ENCODE measurements at regions of chr6 and their contacts with region 1.

Region 1: DNA sequence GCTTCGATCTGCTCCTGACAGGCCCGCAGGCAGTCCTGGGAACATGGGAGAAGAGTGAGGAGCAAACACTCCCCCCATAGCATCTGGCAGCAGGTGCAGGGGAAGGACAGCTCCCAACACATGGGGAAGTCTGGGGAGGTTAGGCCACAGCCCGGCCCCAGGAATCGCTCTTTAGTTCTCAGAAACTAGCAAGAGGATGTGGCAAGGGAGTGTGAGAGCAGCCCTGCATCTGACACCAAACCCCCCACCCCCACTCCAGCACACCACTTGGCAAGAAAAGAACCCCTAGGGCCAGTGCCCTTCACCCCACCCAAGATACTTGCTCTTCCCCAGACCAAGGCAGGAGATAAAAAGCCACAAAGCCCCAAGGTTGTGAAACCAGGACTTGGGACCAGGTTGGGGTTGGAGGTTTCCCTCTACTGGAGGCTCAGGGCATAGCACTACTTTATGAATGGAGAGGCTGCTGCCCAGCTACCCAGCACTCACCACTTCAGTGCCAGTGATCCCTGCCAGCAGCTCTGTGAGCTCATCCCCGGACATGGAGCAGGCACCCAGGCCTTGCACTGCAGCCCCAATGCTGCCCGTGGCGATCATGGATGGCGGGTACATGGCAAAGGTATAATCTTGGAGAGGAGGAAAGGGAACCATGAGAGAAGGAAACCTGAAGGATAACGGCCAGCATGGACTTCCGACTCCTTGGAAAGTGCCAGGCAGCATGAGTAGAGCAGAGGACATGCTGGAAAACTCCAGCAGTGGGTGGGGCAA is 5.4 kb downstream of the CCND3 start:
- DNase-seq: peak; percentile 85
- ATAC-seq: peak; percentile 70
- H3K4me3 ChIP-seq: no peak overlapping the region
- H3K27ac ChIP-seq: peak overlapping the region; percentile 33; the same call in 1 of the 2 replicates
- H3K4me1 ChIP-seq: peaks cover 26% of the 10 kb centered on the region
- H3K27me3 ChIP-seq: no peaks in the 10 kb centered on the region
- CTCF ChIP-seq: peak; percentile 92
- POLR2A ChIP-seq: 0 out of 2 replicates have a peak, but pooled peaks have one; percentile 38
- RAD21 ChIP-seq: peak; percentile 79

Region 2: DNA sequence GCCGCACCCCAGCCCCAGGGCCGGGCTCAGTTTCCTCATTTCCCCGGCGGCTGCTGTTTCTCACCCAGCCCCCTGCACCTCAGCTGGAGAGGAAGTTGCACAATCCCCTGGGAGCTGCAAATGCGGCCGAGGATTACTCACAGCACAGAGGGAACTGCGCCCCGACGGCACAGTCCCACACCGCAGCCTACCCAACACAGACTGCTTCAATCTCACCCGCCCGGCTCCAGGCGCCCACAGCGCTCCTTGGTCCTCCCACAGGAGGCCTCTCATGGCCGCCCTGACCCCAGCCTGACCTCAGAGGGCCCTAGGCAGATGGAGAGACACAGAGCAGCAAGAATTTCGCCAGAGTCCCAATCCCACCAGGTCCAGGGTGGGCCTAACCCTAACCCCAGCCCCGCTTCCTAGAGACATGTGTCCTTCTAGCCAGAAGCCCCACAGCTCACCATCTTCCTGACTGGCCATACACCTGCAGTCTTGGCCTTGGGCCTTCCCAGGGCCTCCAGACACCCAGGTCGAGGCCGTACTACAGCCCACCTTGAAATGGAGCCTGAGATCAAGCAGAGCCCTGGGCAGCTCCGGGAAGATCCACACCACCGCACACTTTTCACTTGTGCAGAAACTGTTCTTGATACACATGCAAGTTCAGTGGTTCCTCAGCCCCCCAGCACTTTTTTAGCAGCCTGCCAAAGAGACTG is 212.6 kb before region 1 on chr6:
- CTCF ChIA-PET with region 1: no interaction called
- POLR2A ChIA-PET with region 1: no interaction called
- dilution Hi-C with region 1: no loop called
- in situ Hi-C with region 1: no loop called
- intact Hi-C with region 1: no loop called
- DNase-seq: peak; percentile 91
- ATAC-seq: peak; percentile 95
- H3K4me3 ChIP-seq: no peak overlapping the region
- H3K27ac ChIP-seq: peak overlapping the region; percentile 72
- H3K4me1 ChIP-seq: peaks cover 14% of the 10 kb centered on the region
- H3K27me3 ChIP-seq: no peaks in the 10 kb centered on the region
- CTCF ChIP-seq: 0 out of 2 replicates have a peak, but pooled peaks have one; percentile 23
- POLR2A ChIP-seq: no peak
- RAD21 ChIP-seq: no peak

Region 3: GRCh38 chr6:41779793-41780545 is 156.3 kb before region 1 on chr6 and contains the start of gene FRS3:
- CTCF ChIA-PET with region 1: no interaction called
- POLR2A ChIA-PET with region 1: no interaction called
- dilution Hi-C with region 1: no loop called
- in situ Hi-C with region 1: loop called (anchors 10 kb)
- intact Hi-C with region 1: loop called (anchors 5 kb)
- DNase-seq: peak; percentile 92
- ATAC-seq: peak; percentile 95
- H3K4me3 ChIP-seq: peak within 1 kb of the TSS; percentile 54
- H3K27ac ChIP-seq: peak within 1 kb of the TSS; percentile 38
- H3K4me1 ChIP-seq: peaks cover 9% of the 10 kb centered on the region
- H3K27me3 ChIP-seq: no peaks in the 10 kb centered on the region
- CTCF ChIP-seq: peak; percentile 97
- POLR2A ChIP-seq: no peak
- RAD21 ChIP-seq: peak; percentile 94
- total RNA-seq, gene FRS3: 0.28 and 0.54 TPM in 2 replicates

Region 4: DNA sequence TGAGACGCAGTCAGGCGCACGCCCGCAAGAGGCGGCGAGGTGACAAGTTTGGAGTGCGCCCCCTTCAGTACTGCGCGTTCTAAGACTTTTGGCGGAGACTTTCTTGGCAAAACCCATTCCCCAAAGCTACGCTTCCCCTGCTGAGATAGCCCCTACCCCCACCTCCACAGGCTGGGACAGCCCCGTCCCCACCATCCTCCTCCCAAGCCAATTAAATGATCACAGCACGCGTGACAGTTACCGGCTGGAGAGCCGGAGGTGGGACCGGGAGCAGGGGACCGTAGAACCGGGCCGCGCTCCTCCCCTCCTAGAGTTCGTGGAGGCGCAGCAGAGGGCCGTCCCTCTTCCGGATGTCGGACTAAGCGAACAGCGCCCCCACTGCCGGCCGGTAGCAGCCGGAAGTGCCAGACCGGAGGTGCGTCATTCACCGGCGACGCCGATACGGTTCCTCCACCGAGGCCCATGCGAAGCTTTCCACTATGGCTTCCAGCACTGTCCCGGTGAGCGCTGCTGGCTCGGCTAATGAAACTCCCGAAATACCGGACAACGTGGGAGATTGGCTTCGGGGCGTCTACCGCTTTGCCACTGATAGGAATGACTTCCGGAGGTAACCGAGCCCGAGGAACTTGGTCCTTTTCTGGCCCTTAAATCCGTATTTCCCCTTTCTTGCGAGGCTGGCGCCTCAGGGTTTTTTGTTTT is 148.9 kb before region 1 on chr6 and contains the start of gene TOMM6:
- CTCF ChIA-PET with region 1: interaction called, 3 read pairs
- POLR2A ChIA-PET with region 1: no interaction called
- dilution Hi-C with region 1: no loop called
- in situ Hi-C with region 1: loop called (anchors 10 kb)
- intact Hi-C with region 1: loop called (anchors 5 kb)
- DNase-seq: peak; percentile 94
- ATAC-seq: peak; percentile 84
- H3K4me3 ChIP-seq: peak within 1 kb of the TSS; percentile 97
- H3K27ac ChIP-seq: peak within 1 kb of the TSS; percentile 94
- H3K4me1 ChIP-seq: peaks cover 7% of the 10 kb centered on the region
- H3K27me3 ChIP-seq: no peaks in the 10 kb centered on the region
- CTCF ChIP-seq: peak; percentile 95
- POLR2A ChIP-seq: peak; percentile 89
- RAD21 ChIP-seq: peak; percentile 4; the same call in 1 of the 2 replicates
- total RNA-seq, gene TOMM6: 120 and 128 TPM in 2 replicates

Region 5: DNA sequence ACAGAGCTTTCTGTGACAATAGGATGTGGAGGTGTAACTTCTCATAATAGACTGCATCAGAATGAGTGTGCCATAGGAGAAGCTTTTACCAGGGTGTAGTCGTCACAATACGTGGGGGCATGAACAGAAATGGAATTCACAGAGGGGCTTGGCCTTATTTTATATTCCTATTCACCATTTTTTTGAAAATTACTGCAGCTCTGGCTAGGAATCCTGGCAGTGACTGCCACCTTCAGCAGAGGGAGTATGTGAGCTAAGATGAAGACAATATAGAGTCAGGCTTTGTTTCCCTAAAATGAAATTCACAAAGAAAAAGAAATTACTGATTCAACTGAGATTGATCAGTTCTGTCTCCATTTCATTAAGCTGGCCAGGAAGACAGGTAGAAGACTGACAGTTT is 134.9 kb before region 1 on chr6:
- CTCF ChIA-PET with region 1: interaction called, 3 read pairs
- POLR2A ChIA-PET with region 1: no interaction called
- dilution Hi-C with region 1: no loop called
- in situ Hi-C with region 1: no loop called
- intact Hi-C with region 1: loop called (anchors 5 kb)
- DNase-seq: peak; percentile 38
- ATAC-seq: peak; percentile 70
- H3K4me3 ChIP-seq: no peak overlapping the region
- H3K27ac ChIP-seq: no peak overlapping the region
- H3K4me1 ChIP-seq: no peaks in the 10 kb centered on the region; the same call in 1 of the 2 replicates
- H3K27me3 ChIP-seq: no peaks in the 10 kb centered on the region
- CTCF ChIP-seq: peak; percentile 68
- POLR2A ChIP-seq: no peak
- RAD21 ChIP-seq: peak; percentile 71

Region 6: DNA sequence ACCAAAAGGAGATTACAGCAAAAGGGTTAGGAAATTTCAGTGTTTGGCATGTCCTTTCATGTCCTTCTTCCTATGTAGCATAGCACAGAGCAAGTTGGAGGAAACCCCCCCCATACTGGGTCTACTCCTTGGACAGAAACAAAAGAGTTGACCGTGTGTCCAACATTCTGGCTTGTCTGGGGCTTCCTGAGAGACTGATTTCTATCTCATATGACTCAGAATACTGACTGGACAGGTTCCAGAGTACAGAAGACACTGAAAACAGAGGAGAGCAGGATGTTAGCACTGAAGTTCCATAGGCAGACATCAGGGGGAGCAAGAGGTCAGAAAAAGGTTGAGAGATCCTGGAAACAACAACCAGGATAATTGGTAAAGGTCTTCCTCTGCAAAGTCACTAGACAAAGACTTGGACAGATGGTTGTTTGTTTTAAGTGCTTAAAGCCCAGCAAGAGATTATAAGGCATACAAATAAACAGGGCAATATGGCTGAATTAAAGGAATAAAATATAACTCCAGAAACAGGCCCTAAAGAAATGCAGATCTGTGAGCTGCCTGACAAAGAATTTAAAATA is 89.5 kb before region 1 on chr6:
- CTCF ChIA-PET with region 1: interaction called, 3 read pairs
- POLR2A ChIA-PET with region 1: no interaction called
- dilution Hi-C with region 1: no loop called
- in situ Hi-C with region 1: loop called (anchors 5 kb)
- intact Hi-C with region 1: loop called (anchors 1 kb)
- DNase-seq: peak; percentile 94
- ATAC-seq: peak; percentile 98
- H3K4me3 ChIP-seq: no peak overlapping the region
- H3K27ac ChIP-seq: peak overlapping the region; percentile 83; the same call in 1 of the 2 replicates
- H3K4me1 ChIP-seq: peaks cover 2% of the 10 kb centered on the region; the same call in 1 of the 2 replicates
- H3K27me3 ChIP-seq: no peaks in the 10 kb centered on the region
- CTCF ChIP-seq: peak; percentile 88
- POLR2A ChIP-seq: no peak
- RAD21 ChIP-seq: peak; percentile 82

Region 7: GRCh38 chr6:41920921-41921711 is 15.1 kb before region 1 on chr6 and contains the starts of genes BYSL and MED20:
- CTCF ChIA-PET with region 1: interaction called, 5 read pairs
- POLR2A ChIA-PET with region 1: no interaction called
- dilution Hi-C with region 1: no loop called
- in situ Hi-C with region 1: no loop called
- intact Hi-C with region 1: loop called (anchors 2 kb)
- DNase-seq: peak; percentile 94
- ATAC-seq: peak; percentile 89
- H3K4me3 ChIP-seq: peak within 1 kb of the TSS; percentile 93
- H3K27ac ChIP-seq: peak within 1 kb of the TSS; percentile 99
- H3K4me1 ChIP-seq: peaks cover 10% of the 10 kb centered on the region
- H3K27me3 ChIP-seq: no peaks in the 10 kb centered on the region
- CTCF ChIP-seq: peak; percentile 95
- POLR2A ChIP-seq: peak; percentile 78
- RAD21 ChIP-seq: no peak
- total RNA-seq, gene BYSL: 25.3 and 26.7 TPM in 2 replicates
- total RNA-seq, gene MED20: 35.6 and 38.2 TPM in 2 replicates

Measured in IMR-90 (cell line).